ENCODE measurements at regions of chr1 and their contacts with region 1.

Region 1: GRCh38 chr1:9643351-9644256 is 7.9 kb upstream of the PIK3CD start:
- DNase-seq: peak; percentile 71
- H3K4me3 Mint-ChIP-seq: peak overlapping the region; percentile 62
- H3K27ac Mint-ChIP-seq: peak overlapping the region; percentile 70
- H3K4me1 Mint-ChIP-seq: peaks cover 45% of the 10 kb centered on the region
- H3K27me3 Mint-ChIP-seq: no peaks in the 10 kb centered on the region

Region 2: GRCh38 chr1:9593492-9594465 is 49.8 kb before region 1 on chr1:
- intact Hi-C with region 1: no loop called
- DNase-seq: peak; percentile 89
- H3K4me3 Mint-ChIP-seq: no peak overlapping the region
- H3K27ac Mint-ChIP-seq: peak overlapping the region; percentile 17
- H3K4me1 Mint-ChIP-seq: peaks cover 18% of the 10 kb centered on the region
- H3K27me3 Mint-ChIP-seq: no peaks in the 10 kb centered on the region

Region 3: DNA sequence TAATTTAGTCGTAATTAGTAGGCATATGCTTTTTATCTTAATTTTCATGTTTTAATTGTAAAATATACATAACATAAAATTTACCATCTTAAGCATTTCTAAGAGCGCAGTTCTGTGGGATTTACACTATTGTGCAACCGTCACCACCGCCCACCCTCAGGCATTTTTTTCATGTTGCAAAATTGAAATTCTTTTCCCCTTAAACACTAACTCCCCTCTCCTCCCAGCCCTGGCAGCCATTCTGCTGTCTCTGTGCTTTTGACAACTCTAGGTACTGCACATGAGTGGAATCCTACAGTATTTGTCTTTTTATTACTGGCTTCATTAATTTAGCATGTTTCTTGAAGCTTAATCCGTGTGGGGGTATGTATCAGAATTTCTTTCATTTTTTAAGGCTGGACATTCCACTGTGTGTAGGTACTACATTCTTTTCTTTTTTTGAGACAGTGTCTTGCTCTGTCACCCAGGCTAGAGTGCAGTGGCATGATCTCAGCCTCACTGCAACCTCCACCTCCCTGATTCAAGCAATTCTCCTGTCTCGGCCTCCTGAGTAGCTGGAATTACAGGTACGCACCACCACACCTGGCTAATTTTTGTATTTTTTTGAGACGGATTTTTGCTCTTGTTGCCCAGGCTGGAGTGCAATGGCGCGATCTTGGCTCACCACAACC is 15.9 kb after region 1 on chr1:
- intact Hi-C with region 1: loop called (anchors 2 kb)
- DNase-seq: no peak
- H3K4me3 Mint-ChIP-seq: peak overlapping the region; percentile 53
- H3K27ac Mint-ChIP-seq: peak overlapping the region; percentile 76
- H3K4me1 Mint-ChIP-seq: peaks cover 62% of the 10 kb centered on the region
- H3K27me3 Mint-ChIP-seq: no peaks in the 10 kb centered on the region

Region 4: GRCh38 chr1:9700340-9700739 is 56.7 kb after region 1 on chr1:
- intact Hi-C with region 1: no loop called
- DNase-seq: no peak
- H3K4me3 Mint-ChIP-seq: no peak overlapping the region
- H3K27ac Mint-ChIP-seq: no peak overlapping the region
- H3K4me1 Mint-ChIP-seq: peaks cover 48% of the 10 kb centered on the region
- H3K27me3 Mint-ChIP-seq: no peaks in the 10 kb centered on the region

Measured in activated CD4-positive, alpha-beta T cell treated with anti-CD3 and anti-CD28 coated beads, Interleukin-2, amount 10 ng/mL, durations not matched to agents 24 days and 14 days (primary cell).